Activated naive CD4-positive, alpha-beta T cell treated with anti-CD3 and anti-CD28 coated beads for 36 hours (primary cell): ENCODE measurements at regions of chr16 and their contacts with region 1.

Region 1: GRCh38 chr16:12067714-12068401 is 91.3 kb downstream of the SNX29 start:
- DNase-seq: peak; percentile 83
- H3K4me3 Mint-ChIP-seq: no peak overlapping the region
- H3K27ac Mint-ChIP-seq: no peak overlapping the region
- H3K4me1 Mint-ChIP-seq: no peaks in the 10 kb centered on the region
- H3K27me3 Mint-ChIP-seq: no peaks in the 10 kb centered on the region

Region 2: DNA sequence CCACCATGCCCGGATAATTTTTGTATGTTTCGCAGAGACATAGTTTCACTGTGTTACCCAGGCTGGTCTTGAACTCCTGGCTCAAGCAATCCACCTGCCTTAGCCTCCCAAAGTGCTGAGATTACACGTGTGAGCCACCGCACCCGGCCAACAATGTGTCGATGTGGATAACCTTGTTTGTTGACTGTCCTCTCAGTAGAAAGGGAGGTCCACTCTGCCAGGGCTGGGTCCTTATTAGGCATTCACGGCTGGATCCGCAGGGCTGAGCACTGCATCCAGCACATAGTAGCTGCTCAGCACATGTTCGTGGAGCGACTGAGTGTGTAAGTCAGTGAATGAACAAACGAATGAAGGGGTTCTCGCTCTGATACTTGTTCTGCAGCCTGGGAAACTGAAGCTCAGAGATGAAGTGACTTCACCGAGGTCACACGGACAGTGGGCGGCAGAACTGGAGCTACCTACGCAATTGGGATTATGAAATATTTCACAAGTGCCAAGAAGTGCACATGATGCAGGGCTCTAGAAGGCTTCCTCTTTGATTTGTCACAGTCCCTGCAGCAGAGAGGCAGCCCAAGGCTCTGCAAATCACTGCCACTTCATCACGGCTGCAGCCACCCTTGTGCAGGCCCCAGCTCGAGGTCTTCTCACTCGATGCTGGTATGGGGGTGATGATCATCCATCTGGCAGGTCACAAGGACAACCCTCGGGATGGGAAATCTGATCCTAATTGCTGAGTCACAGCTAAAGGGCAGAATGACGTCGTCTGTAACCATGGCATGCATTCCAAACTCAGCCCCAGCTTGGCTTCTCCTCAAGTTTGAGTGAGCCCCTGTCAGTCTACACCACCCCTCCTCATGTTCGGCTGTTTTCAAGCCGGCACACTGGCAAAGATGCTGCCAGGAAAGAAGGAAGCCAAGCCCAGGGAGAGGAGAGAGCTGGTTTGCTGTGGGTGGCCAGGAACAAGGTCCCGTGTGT is 427.6 kb before region 1 on chr16:
- CTCF ChIA-PET with region 1: no interaction called
- intact Hi-C with region 1: loop called (anchors 2 kb)
- DNase-seq: no peak
- H3K4me3 Mint-ChIP-seq: no peak overlapping the region
- H3K27ac Mint-ChIP-seq: no peak overlapping the region
- H3K4me1 Mint-ChIP-seq: peaks cover 11% of the 10 kb centered on the region
- H3K27me3 Mint-ChIP-seq: no peaks in the 10 kb centered on the region

Region 3: DNA sequence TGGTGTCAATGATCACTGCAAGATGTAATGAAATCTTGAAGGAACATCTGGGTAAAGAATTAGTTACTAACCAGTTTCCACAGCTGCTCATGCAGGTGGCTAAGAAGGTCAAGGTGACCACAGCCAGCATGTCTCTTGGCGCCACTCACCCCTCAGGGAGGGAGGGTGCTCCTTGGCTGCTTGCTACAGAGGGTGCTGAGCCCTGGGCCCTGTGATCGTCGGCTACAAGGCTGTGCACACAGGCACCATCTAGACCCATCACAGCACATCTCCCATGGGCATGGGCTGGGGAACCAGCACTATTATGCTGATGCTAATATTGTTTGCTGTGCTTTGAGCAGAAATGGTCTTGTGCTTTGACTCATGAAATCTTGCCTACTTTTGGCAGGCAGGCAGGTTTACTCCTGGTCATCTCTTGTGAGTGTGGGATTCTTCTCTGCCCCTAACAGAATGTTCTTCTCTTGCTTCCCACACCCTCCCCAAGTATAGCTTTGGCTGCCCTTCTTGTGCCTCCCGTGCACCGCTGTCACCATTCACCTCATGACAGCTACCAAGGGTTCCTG is 361.6 kb before region 1 on chr16:
- CTCF ChIA-PET with region 1: no interaction called
- intact Hi-C with region 1: no loop called
- DNase-seq: no peak
- H3K4me3 Mint-ChIP-seq: no peak overlapping the region
- H3K27ac Mint-ChIP-seq: no peak overlapping the region
- H3K4me1 Mint-ChIP-seq: peaks cover 8% of the 10 kb centered on the region
- H3K27me3 Mint-ChIP-seq: no peaks in the 10 kb centered on the region

Region 4: GRCh38 chr16:11742539-11743307 is 325.1 kb before region 1 on chr16 and contains the start of gene TXNDC11:
- CTCF ChIA-PET with region 1: interaction called, 3 read pairs
- intact Hi-C with region 1: loop called (anchors 10 kb)
- DNase-seq: peak; percentile 99
- H3K4me3 Mint-ChIP-seq: peak within 1 kb of the TSS; percentile 91
- H3K27ac Mint-ChIP-seq: peak within 1 kb of the TSS; percentile 96
- H3K4me1 Mint-ChIP-seq: peaks cover 48% of the 10 kb centered on the region
- H3K27me3 Mint-ChIP-seq: no peaks in the 10 kb centered on the region
- total RNA-seq, gene TXNDC11: 24.6 to 25.5 TPM

Region 5: GRCh38 chr16:11977376-11978041 is 90.3 kb before region 1 on chr16:
- CTCF ChIA-PET with region 1: interaction called, 8 read pairs
- intact Hi-C with region 1: loop called (anchors 10 kb)
- DNase-seq: no peak
- H3K4me3 Mint-ChIP-seq: peak overlapping the region; percentile 96
- H3K27ac Mint-ChIP-seq: no peak overlapping the region
- H3K4me1 Mint-ChIP-seq: peaks cover 34% of the 10 kb centered on the region
- H3K27me3 Mint-ChIP-seq: no peaks in the 10 kb centered on the region

Region 6: DNA sequence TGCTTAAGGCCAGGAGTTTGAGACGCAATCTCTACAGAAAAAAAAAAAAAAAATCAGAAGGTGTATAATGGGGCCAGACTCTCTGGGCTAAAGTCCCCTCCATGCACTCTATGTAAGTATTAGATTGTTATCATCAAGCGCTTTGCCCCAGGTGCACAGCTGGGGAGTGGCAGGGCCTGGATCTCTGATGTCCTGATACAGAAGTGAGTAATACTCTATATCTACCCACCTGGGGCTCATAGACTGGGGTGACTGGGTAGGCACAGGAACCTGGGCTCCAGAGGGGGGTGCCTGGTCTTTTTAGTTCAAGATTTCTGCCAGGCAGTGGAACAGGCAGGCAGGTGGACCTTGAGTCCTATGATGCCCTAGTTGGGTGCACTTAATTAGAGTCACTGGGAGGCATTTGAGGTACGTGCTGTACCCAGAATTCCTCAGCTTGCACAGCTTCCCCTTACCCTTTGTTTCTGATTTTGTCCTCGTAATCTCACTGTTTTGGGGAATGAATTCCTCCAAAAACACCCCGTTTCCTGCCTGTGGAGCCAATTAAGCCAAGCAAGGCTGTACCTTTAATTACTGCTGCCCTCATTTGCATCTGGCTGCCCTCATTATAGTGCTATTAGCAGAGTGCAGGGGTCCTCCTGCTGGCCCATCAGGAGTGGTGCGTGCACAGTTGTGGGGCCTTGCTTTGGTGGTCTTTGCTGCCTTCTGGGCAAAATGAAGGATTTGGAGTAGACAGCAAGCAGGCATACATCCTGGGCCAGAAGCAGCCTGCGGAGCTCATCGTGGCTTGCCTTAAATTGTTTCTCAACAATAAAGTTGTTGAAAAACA is 147.6 kb after region 1 on chr16:
- CTCF ChIA-PET with region 1: no interaction called
- intact Hi-C with region 1: no loop called
- DNase-seq: no peak
- H3K4me3 Mint-ChIP-seq: no peak overlapping the region
- H3K27ac Mint-ChIP-seq: no peak overlapping the region
- H3K4me1 Mint-ChIP-seq: no peaks in the 10 kb centered on the region
- H3K27me3 Mint-ChIP-seq: no peaks in the 10 kb centered on the region

Region 7: DNA sequence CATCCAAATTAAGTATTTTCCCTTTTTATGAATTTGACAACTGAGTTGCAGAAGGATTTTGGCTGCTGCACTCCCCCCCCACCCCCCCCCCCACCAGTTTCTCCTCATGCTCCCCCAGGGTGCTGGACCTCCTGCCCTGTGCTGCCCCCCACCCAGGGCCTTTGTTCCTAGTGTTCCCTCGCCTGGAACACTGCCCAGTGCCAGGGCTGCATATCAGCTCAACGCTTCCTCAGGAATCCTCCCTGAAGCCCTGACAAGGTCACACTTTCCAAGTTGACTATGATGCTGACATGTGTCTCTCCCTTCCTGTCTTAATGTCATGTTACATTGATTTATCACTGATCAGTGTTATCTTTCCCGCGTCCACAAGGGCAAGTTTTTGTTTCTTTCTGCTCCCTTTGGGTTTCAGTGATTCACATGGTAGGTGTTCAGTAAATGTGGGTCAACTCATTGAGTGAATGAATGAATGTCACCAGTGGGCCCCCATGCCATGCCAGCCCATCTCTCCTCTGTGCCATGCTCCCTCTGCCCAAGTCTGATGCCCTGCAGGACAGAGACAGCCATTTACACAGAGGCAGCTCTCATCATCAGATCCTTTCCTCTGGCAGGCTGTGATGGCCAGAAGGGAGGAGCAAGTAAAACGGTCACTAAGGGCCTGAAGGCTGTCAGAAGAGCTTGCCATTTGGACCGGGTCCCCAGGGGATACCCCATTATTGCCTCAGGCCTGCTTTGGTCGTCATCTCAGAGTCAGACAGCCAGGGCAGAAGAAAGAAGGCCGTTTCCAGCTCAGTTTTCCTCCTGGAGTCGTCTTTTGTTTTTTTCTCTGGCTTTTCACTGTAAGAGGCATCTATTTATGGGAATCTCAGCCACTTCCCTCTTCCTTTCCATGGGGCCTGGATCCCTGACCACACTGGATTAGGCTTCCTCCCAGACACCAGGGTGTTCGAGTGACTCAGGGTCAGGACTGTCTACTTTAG is 294.9 kb after region 1 on chr16:
- CTCF ChIA-PET with region 1: no interaction called
- intact Hi-C with region 1: no loop called
- DNase-seq: no peak
- H3K4me3 Mint-ChIP-seq: no peak overlapping the region
- H3K27ac Mint-ChIP-seq: no peak overlapping the region
- H3K4me1 Mint-ChIP-seq: no peaks in the 10 kb centered on the region
- H3K27me3 Mint-ChIP-seq: no peaks in the 10 kb centered on the region